PC-9 (cell line): ENCODE measurements at regions of chr4 and their contacts with region 1.

Region 1: GRCh38 chr4:40395908-40396793 is 61.0 kb downstream of the CHRNA9 start:
- DNase-seq: peak; percentile 82 to 94
- H3K4me3 ChIP-seq: peak overlapping the region; percentile 32; the same call in 1 of the 2 replicates
- H3K27ac ChIP-seq: peak overlapping the region; percentile 67
- H3K4me1 ChIP-seq: peaks cover 29% of the 10 kb centered on the region
- H3K27me3 ChIP-seq: no peaks in the 10 kb centered on the region
- CTCF ChIP-seq: no peak

Region 2: DNA sequence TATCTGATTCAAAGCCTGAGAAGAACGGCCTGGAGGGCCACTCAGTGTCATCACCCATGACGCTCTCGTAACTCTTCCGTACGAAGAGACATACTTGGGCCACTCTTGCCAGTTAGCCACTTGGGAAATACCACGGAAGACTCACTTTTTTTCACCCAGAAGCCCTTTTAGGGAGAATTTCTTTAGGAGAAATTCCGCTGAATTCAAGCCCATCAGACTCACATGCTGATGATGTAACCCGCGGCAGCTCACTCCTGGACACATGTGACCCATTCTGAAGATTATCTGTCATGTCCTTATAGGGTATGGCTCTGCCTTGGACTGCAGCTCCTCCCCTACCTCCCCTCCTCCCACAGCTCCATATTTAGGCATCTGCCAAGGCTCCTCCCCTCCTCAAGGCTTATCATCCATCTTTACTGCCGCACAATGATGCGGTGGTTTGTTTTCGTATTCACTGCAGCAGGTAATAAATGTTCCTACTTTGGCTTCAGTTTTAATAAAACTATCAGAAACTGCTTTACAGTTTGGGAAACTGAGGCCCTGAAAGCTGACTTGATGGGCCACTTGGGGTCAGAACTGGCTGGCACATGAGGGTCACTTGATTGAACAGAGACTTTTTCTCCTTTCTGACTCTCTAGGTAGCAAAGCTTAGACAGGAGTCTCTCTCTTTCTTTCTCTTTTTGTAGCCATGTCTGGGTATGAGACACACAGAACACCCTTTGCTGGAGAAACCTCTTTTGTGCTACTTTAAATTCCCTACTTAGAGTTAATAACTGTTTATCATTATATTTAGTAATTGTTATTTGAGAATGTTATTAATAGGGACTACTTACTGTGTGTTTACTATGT is 157.2 kb before region 1 on chr4:
- CTCF ChIA-PET with region 1: no interaction called
- POLR2A ChIA-PET with region 1: no interaction called
- intact Hi-C with region 1: no loop called
- DNase-seq: no peak
- H3K4me3 ChIP-seq: no peak overlapping the region
- H3K27ac ChIP-seq: no peak overlapping the region
- H3K4me1 ChIP-seq: no peaks in the 10 kb centered on the region
- H3K27me3 ChIP-seq: no peaks in the 10 kb centered on the region
- CTCF ChIP-seq: no peak

Region 3: DNA sequence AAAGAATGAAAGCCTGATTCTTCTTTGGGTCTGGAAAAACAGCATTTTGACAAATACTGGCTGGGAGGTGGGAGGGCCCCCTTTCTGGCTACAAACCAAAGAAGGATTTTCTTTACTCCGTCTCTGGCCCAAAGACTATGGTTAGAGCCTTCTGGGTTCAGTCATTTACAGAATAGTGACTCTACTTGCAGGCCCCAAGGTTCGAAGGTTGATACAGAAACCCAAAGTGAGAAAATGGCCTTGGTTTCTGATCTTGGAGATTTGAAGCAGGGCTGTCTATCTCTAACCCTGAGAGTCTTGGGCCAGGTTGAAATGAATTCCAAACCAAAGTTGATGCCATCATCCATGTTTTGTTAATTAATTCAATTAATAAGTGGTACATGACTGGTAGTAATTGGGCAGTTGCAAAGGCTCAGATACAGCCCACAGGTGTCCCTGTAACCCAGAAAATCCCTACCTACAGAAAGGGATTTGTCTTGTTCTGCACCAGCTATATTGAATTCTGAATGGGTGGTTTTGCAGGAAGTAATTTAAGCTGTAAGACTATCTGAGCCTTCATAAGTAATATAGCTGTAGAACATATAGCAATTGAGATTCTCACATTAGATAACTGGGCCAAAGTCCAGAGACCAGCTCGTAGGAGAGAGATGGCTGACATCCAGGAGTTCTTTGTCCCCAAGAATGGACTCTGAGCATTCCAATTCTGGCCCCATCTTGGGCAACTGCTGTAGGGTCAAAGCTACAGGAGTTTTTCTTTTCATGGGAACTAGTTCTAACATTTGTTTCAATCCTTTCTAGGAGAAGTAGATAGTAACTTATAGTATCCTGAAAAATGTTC is 26.5 kb before region 1 on chr4:
- CTCF ChIA-PET with region 1: interaction called, 11 read pairs
- POLR2A ChIA-PET with region 1: no interaction called
- intact Hi-C with region 1: no loop called
- DNase-seq: peak in 1 of 2 experiments; percentile 8
- H3K4me3 ChIP-seq: no peak overlapping the region
- H3K27ac ChIP-seq: no peak overlapping the region
- H3K4me1 ChIP-seq: peaks cover 15% of the 10 kb centered on the region
- H3K27me3 ChIP-seq: no peaks in the 10 kb centered on the region
- CTCF ChIP-seq: no peak